Activated T-helper 1 cell treated with anti-CD3 and anti-CD28 coated beads, Interleukin-12 subunit alpha, Interleukin-12 subunit beta, Interleukin-2, Interleukin-4 antibody, amounts not matched to agents 30 ng/mL and 10 ng/mL and 1 ng/mL, durations not matched to agents 14 hours and 24 hours and 36 hours (primary cell): ENCODE measurements at regions of chr17 and their contacts with region 1.

Region 1: GRCh38 chr17:81512560-81513371 is at the start of gene ACTG1:
- DNase-seq: peak; percentile 88
- H3K4me3 Mint-ChIP-seq: peak within 1 kb of the TSS; percentile 100
- H3K27ac Mint-ChIP-seq: peak within 1 kb of the TSS; percentile 94
- H3K4me1 Mint-ChIP-seq: peaks cover 24% of the 10 kb centered on the region
- H3K27me3 Mint-ChIP-seq: no peaks in the 10 kb centered on the region
- total RNA-seq, gene ACTG1: 3,516 TPM in 2 replicates

Region 2: DNA sequence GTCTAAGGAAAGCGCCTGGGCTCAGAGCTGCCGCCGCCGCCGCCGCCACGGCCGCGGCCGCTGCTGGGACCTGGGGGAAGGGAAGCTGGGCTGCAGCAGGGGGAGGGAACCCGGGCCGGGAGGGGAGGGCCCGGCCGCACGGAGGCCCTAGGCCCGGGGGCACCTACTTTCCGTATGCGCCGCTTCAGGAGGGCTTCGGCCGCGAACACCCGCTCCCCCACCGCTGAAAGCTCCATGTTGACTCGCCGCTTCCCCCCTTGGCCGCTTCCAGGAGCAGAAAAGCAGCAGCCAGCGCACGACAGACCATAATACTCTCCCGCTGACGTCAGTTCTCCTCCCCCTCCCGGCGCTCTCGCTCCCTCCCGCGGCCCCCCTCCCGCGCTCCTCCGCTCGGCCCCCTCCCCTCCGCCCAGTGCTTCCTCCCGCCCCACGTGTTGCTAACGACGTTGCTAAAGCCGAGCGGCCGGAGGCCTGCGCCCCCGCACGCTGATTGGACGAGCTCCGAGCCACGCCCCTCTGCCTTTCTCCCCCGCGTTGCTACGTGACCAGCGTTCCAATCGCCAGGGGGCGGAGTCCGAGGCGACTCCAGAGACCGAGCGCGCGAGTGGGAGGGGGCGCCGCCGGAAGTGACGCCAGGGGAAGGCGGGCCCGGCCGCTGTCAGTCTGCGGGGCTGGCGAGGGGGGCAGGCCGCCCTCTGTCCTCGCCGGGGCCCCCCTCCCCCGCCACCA is 1715.8 kb before region 1 on chr17 and contains the start of gene CBX8:
- intact Hi-C with region 1: loop called (anchors 5 kb)
- DNase-seq: peak; percentile 100
- H3K4me3 Mint-ChIP-seq: peak within 1 kb of the TSS; percentile 85
- H3K27ac Mint-ChIP-seq: peak within 1 kb of the TSS; percentile 77
- H3K4me1 Mint-ChIP-seq: peaks cover 23% of the 10 kb centered on the region
- H3K27me3 Mint-ChIP-seq: peaks cover 42% of the 10 kb centered on the region
- total RNA-seq, gene CBX8: 6.2 and 6.6 TPM in 2 replicates

Region 3: GRCh38 chr17:81346090-81346907 is 166.5 kb before region 1 on chr17:
- intact Hi-C with region 1: loop called (anchors 1 kb)
- DNase-seq: peak; percentile 93
- H3K4me3 Mint-ChIP-seq: peak overlapping the region; percentile 39
- H3K27ac Mint-ChIP-seq: no peak overlapping the region
- H3K4me1 Mint-ChIP-seq: peaks cover 6% of the 10 kb centered on the region
- H3K27me3 Mint-ChIP-seq: peaks cover 49% of the 10 kb centered on the region

Region 4: DNA sequence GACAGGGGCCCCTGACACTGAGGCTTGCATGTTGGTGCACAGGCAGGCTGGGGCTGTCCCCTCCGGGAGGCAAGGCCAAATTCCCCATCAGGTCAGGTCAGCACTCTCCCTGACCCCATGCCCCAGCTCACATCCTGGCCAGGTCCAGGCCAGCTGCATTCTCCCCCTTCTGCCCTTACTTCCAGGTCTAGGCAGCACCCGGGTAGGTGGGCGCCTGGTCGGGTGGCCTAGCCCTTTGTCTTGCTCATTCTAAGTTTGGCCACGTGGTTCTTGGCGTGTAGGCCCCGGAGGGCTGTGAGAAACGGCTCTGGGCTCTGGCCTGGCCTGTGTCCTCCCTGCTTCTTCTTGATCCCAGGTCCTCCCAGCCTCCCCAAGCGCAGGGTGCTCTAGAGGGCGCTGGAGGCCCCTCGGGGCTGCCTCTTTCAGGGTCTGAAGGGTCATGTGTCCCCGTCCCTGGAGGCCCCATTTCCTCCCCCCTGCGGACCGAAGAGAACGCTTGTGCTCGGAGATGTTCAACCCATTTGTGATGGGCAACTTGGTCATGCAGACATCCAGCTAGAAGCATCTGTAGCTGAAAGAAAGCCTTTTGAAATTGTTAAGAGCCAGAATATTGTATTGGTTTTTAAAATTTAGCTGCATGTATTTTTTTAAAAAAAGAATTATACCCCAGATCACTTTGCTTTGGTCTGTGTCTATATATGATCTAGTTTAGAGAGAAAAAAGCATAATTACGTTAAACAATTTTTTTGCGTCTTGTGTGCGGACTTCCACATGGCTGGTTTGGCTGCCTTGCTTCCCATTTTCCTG is 110.8 kb before region 1 on chr17:
- intact Hi-C with region 1: loop called (anchors 2 kb)
- DNase-seq: no peak
- H3K4me3 Mint-ChIP-seq: no peak overlapping the region
- H3K27ac Mint-ChIP-seq: no peak overlapping the region
- H3K4me1 Mint-ChIP-seq: peaks cover 5% of the 10 kb centered on the region
- H3K27me3 Mint-ChIP-seq: peaks cover 57% of the 10 kb centered on the region

Region 5: GRCh38 chr17:81440876-81441244 is 71.9 kb before region 1 on chr17:
- intact Hi-C with region 1: no loop called
- DNase-seq: no peak
- H3K4me3 Mint-ChIP-seq: no peak overlapping the region
- H3K27ac Mint-ChIP-seq: no peak overlapping the region
- H3K4me1 Mint-ChIP-seq: no peaks in the 10 kb centered on the region
- H3K27me3 Mint-ChIP-seq: no peaks in the 10 kb centered on the region

Region 6: GRCh38 chr17:81537343-81537855 is 24.6 kb after region 1 on chr17:
- intact Hi-C with region 1: loop called (anchors 2 kb)
- DNase-seq: no peak
- H3K4me3 Mint-ChIP-seq: no peak overlapping the region
- H3K27ac Mint-ChIP-seq: no peak overlapping the region
- H3K4me1 Mint-ChIP-seq: no peaks in the 10 kb centered on the region
- H3K27me3 Mint-ChIP-seq: peaks cover 11% of the 10 kb centered on the region

Region 7: DNA sequence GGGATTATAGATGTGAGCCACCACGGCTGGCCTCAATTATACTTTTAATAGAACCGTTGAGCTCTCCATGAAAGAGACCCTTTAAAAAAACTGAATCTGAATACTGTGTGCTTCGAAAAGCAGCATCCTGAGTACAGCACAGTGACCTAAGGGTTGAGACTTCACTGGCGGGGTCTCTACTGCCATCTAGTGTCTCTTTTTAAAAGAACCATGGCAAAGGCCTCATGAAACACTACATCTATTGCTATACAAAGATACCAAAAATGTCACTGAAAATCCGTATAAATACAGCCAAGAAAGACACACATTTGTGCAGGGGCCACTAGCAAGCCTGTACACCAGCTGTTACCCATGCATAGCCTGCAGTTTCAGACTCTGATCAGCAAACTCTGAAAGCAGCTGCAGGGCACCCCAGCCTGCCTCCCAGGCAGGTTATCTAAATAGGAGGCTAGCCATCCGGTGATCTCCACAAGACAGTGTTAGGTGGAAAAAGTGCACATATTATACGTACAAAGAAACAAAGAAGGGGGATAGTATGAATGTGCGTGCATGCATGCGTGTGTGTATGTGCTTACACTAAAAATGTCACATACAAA is 88.9 kb after region 1 on chr17:
- intact Hi-C with region 1: loop called (anchors 5 kb)
- DNase-seq: peak; percentile 16
- H3K4me3 Mint-ChIP-seq: no peak overlapping the region
- H3K27ac Mint-ChIP-seq: peak overlapping the region; percentile 20
- H3K4me1 Mint-ChIP-seq: peaks cover 8% of the 10 kb centered on the region
- H3K27me3 Mint-ChIP-seq: no peaks in the 10 kb centered on the region

Region 8: GRCh38 chr17:81727141-81728031 is 214.6 kb after region 1 on chr17:
- intact Hi-C with region 1: no loop called
- DNase-seq: no peak
- H3K4me3 Mint-ChIP-seq: no peak overlapping the region
- H3K27ac Mint-ChIP-seq: no peak overlapping the region
- H3K4me1 Mint-ChIP-seq: no peaks in the 10 kb centered on the region
- H3K27me3 Mint-ChIP-seq: peaks cover 7% of the 10 kb centered on the region

Region 9: DNA sequence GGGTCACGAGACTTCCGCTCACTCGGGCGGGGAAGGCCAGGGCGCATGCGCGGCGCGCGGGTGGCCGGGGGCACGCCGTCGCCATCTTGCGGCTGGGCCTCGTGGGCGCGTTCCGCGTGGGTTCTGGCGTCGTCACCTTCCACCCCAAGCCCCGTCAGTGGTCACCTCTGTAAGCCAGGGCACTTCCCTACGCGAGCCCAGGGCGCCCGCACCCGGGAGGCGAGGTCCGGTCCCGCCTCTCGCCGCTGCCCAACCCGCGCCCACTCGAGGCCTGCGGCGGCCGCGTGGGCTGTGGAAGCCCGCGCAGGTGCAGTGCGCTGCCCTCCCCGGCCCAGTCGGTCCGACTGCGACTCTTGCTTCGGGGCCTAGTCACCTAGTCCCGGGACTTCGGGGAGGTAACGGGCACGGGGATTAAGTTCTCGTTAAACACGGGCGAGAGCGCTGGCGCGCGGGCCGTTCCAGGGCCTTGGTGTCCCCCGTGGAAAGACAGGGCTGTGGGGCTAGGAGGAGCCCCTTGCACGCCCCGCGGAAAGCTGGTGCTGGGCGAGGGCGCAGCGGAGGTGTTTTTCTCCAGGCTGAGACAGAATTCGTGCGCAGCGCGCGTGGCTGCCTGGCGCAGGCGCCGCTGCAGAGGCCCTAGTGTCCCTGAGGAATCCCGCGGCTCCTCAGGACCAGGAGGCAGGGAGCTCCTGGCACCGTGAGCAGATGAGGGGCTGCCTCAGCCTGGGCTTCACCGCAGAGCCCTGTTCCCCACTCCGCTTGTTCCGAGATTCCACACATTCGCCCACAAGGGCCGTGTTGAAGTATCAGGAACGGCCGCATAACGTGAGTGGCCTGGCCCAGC is 358.8 kb after region 1 on chr17:
- intact Hi-C with region 1: loop called (anchors 5 kb)
- DNase-seq: peak; percentile 96
- H3K4me3 Mint-ChIP-seq: peak overlapping the region; percentile 84
- H3K27ac Mint-ChIP-seq: peak overlapping the region; percentile 90
- H3K4me1 Mint-ChIP-seq: peaks cover 7% of the 10 kb centered on the region
- H3K27me3 Mint-ChIP-seq: no peaks in the 10 kb centered on the region